AG04449 (cell line): ENCODE measurements at regions of chr17 and their contacts with region 1.

Region 1: GRCh38 chr17:78019367-78019975 is 61.0 kb downstream of the TNRC6C start:
- DNase-seq: no peak
- H3K4me3 ChIP-seq: no peak overlapping the region
- CTCF ChIP-seq: no peak

Region 2: GRCh38 chr17:77881545-77881944 is 137.9 kb before region 1 on chr17:
- CTCF ChIA-PET with region 1: no interaction called
- POLR2A ChIA-PET with region 1: no interaction called
- DNase-seq: no peak
- H3K4me3 ChIP-seq: no peak overlapping the region
- CTCF ChIP-seq: no peak

Region 3: DNA sequence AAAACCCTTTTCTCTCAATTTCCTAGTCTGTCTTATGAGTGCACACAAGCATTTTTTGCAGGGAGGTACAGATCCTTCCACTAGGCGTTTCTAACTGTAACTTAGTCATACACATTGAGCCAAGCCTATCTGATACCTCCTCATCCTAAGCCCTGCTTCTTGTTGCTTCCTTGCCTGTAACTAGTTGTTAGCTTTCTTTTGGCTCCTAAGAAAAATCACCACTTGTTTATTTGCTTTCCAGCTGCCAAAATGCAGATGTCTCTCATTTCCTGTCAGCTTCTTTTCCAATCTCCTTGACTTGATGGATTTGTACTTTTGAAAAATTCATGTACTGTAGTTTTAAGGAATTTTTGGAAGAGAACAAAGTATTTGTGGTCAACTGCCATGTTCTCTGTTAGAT is 12.7 kb after region 1 on chr17:
- CTCF ChIA-PET with region 1: interaction called, 130 read pairs
- POLR2A ChIA-PET with region 1: no interaction called
- DNase-seq: no peak
- H3K4me3 ChIP-seq: no peak overlapping the region
- CTCF ChIP-seq: no peak

Region 4: GRCh38 chr17:78058001-78058400 is 38.5 kb after region 1 on chr17:
- CTCF ChIA-PET with region 1: interaction called, 16 read pairs
- POLR2A ChIA-PET with region 1: no interaction called
- DNase-seq: no peak
- H3K4me3 ChIP-seq: no peak overlapping the region
- CTCF ChIP-seq: no peak

Region 5: DNA sequence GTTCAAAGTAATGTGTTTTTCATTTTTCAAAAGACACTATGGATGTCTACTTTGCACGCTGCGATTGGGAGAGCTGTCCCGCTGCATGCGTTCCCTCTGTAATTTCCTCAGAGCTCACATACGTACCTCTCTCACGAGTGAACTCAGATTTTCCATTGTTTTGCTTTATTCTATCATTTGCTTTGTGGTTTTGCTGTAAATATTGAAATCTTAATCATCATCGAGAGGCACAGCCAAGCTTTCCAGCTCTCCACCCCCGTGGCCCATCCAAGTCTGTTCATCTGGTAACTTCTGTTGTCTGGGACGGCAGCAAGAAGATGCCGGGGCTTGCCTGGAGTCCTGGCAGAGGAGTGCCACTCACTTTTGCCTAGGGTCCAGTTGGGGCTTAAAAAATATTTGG is 88.0 kb after region 1 on chr17:
- CTCF ChIA-PET with region 1: interaction called, 16 read pairs
- POLR2A ChIA-PET with region 1: no interaction called
- DNase-seq: no peak
- H3K4me3 ChIP-seq: no peak overlapping the region
- CTCF ChIP-seq: no peak

Region 6: DNA sequence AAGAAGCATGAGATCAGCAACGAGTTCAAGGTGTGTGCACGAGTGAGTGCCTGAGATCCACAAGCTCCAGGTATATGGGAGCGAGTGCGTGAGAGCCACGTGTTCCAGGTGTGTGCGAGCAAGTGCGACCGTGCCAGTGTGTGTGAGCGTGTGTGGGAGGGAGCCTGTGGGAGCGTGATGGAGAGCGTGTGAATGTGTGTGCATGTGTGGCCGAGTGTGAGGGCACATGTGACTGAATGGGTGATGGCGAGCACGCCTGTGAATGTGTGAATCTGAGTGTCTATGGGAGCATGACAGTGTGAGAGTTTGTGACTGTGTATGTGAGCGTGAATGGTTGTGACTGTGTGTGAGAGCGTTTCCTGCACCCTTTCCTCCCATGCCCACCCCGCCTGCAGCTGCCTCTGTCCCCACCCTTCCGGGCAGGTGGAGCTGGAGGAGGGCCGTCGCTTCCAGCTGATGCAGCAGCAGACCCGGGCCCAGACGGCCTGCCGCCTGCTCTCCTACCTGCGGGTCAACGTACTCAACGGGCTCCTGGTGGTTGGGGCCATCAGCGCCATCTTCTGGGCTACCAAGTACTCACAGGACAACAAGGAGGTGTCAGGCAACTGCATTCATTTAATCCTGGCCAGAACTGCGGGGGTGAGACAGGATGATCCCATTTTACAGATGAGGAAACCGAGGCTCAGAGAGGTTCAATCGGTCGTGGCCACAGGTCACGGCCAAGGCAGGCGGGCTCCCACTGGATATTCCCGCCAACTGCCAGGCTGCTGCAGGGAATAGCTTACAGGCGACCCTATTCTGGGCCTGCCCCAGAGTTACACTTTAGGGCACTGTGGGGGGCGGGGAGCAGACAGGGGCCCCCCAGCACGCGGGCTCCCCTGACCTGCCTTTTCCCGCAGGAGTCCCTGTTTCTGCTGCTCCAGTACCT is 114.8 kb after region 1 on chr17:
- CTCF ChIA-PET with region 1: interaction called, 28 read pairs
- POLR2A ChIA-PET with region 1: no interaction called
- DNase-seq: no peak
- H3K4me3 ChIP-seq: no peak overlapping the region
- CTCF ChIP-seq: peak; percentile 53

Region 7: DNA sequence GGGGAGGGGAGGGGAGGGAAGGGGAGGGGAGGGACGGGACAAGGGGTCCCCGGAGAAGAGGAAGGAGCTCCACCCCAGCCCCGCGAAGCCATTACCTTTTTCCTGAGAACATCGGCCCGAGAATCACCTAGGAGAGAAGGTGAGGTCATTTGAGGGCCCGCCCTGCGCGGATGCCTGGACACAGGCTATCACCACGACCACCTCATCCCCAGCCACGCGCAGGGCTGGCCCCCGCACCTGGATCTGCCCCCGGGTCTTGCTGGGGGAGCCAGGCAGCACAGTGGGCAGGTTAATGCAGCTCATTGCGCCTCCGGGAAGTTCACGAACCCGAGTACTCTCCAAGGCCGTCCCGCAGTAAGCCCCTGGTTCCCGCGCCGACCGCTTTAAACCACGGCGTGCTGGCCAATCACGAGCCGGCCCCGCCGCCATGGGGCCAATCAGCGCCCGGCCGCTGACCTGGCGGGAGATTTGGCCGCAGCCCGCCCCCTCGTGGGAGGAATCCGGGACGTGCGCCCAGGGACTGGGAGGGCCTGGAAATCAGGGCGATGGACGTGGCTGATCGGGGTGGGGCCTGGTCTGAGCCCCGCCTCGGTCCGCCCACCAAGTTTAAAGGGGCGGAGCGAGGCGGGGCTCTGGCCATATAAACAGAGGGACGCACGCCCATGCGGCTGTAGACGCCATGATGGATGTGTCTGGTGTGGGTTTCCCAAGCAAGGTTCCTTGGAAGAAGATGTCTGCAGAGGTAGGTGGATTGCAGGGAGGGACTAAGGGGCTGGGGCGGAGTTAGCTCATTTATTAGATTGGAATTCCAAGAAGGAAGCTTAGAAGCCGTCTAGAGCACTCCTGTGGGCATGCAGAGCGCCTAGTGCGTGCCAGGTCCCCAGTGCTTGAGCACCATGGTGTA is 167.5 kb after region 1 on chr17 and contains the starts of genes AFMID and TK1:
- CTCF ChIA-PET with region 1: interaction called, 10 read pairs
- POLR2A ChIA-PET with region 1: no interaction called
- DNase-seq: peak; percentile 52
- H3K4me3 ChIP-seq: peak within 1 kb of the TSS; percentile 87
- CTCF ChIP-seq: peak; percentile 95